ENCODE measurements at regions of chr5 and their contacts with region 1.

Region 1: DNA sequence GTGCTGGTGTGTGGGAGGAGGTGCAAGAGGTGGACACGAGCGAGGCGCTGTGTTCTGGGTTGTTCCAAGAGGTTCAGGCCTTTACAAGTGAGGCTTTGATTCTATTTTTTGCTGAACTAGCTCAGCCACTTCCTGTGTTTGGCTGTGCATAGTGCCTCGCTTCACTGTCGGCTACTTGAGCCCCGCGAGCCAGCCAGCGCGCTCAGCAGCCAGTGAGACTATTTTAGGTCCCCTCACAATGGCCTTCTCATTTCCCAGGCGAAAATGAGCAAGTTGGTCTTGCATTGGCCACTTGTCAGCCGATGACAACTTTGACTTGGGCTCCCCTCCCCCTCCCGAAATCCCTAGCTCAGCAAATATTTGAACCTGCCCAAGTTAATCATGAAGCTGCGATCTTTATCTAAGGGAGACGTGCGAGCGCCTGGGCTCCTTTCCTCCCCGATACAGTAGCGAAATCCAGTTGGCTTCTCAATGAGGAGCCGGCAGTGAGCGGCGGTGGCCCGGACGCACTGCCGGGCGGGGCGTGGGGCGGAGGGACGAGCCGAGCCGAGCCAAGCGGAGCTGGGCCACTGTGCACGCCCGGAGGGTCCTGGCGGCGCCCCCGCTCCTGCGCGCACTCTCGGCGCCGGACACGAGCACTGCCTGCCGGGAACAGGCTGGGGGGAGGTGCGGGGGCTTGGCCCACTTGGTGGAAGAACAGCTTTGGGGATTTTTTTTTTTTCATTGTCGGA is 72.6 kb downstream of the PIK3R1 start:
- DNase-seq: peak; percentile 81
- H3K4me3 ChIP-seq: peak overlapping the region; percentile 29 to 58 (median 50)
- H3K27ac ChIP-seq: peak overlapping the region; percentile 78 to 94 (median 84)
- H3K4me1 ChIP-seq: peaks cover 0 to 96% (median 92%) of the 10 kb centered on the region in 4 donors
- H3K27me3 ChIP-seq: no peaks in the 10 kb centered on the region
- CTCF ChIP-seq: no peak
- EP300 ChIP-seq: no peak
- POLR2A ChIP-seq: no peak

Region 2: GRCh38 chr5:67165526-67166459 is 1122.3 kb before region 1 on chr5:
- intact Hi-C with region 1: loop called (anchors 10 kb)
- DNase-seq: peak; percentile 92
- H3K4me3 ChIP-seq: peak overlapping the region in 3 of 4 donors; percentile 23 to 38 (median 32)
- H3K27ac ChIP-seq: peak overlapping the region; percentile 59 to 77 (median 76)
- H3K4me1 ChIP-seq: peaks cover 0 to 20% (median 19%) of the 10 kb centered on the region in 4 donors
- H3K27me3 ChIP-seq: no peaks in the 10 kb centered on the region
- CTCF ChIP-seq: peak; percentile 50 to 84 (median 78)
- EP300 ChIP-seq: no peak
- POLR2A ChIP-seq: no peak

Region 3: DNA sequence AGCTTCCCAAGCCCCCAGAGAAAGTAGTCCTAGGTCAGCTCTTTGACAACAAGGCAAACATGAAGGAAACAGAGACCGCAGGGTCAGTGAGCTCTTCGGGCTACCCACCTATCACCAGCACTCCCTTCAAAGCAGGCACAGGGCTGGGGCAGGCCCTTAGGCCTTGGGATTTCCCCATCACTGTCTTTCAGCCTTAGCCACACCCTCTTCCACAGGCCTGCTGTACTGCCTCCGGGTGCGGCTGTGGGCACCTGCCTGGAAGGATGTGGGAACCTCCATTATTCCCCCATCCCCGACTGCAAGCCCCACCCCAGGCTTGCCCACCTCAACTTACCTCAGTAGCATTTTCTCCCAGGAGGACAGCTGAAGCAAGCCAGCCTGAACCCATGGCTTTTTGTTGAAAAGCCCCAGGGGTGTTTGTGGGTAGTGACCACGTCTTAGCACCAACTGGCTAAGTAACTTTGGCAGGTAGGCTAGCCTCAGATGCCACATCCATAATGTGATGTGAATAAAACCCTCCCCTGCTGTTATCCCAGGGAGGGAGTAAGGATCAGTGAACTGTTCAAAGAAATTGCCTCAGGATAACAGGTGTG is 27.6 kb after region 1 on chr5:
- intact Hi-C with region 1: no loop called
- DNase-seq: no peak
- H3K4me3 ChIP-seq: no peak overlapping the region
- H3K27ac ChIP-seq: no peak overlapping the region
- H3K4me1 ChIP-seq: no peaks in the 10 kb centered on the region
- H3K27me3 ChIP-seq: no peaks in the 10 kb centered on the region
- CTCF ChIP-seq: no peak
- EP300 ChIP-seq: no peak
- POLR2A ChIP-seq: no peak

Region 4: DNA sequence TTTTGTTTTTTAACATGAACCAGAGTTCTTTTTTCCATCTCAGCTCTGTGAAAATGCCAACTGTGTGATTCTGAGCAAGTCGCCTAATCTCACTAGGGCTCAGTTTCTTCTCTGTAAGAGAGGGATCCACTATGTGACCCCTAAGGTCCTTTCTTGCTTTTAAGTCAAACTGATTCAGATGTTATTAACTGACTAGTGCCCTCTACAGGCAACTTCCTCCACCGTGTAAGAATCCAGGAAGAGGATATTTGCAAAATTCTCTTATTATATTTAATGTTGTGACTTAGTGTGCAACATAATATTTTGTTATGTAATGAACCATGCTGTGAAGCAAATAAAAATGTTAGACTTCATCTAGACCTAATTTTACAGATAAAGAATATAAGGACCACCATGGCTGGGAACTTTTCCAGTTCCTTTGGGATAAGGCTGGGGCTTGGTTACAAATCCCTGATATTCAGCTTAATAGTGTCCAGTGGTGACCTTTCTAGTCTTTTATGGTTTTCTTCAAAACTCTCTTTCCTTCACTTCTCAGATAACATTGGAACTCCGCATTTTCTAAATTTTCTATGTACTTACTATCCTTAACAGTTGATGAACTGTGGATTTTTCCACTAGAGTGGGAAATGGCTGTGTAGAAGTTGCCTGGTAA is 172.1 kb after region 1 on chr5:
- intact Hi-C with region 1: loop called (anchors 5 kb)
- DNase-seq: no peak
- H3K4me3 ChIP-seq: no peak overlapping the region
- H3K27ac ChIP-seq: no peak overlapping the region
- H3K4me1 ChIP-seq: peaks cover 0 to 18% (median 11%) of the 10 kb centered on the region in 4 donors
- H3K27me3 ChIP-seq: no peaks in the 10 kb centered on the region
- CTCF ChIP-seq: peak in 3 of 4 experiments; percentile 38 to 62 (median 45)
- EP300 ChIP-seq: no peak
- POLR2A ChIP-seq: no peak

Region 5: DNA sequence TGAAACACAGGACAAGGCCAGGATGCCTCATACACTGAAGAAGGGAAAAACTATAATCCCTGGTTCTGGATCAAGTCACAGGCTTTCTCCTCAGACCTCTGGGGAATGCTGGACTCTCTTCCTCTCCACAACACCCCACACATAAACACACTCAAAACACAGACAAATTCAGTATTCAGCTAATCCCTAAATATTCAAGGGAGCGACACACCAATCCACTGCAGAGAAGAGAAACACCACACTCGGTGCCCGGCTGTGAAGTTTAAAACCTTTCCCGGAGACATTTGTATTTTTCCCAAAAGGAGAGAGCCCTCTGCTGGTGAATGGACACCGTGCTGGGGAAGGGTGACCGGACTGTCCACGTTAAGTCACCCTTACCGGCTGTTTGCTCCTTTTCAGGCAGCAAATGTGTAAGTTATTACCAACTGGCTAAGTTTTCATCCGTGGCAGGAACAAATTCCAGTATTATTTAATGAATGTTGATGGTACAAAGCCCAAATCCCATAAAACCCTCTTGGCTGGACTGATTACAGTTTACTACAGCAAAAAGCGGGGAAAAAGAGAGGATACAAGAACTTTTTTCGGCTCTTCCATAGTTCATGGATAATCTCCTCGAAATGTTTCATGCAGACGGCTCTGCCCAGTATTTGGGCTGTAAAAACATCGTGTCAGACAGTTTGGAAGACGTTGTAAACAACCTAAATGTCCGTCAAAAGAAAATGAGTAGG is 674.8 kb after region 1 on chr5:
- intact Hi-C with region 1: loop called (anchors 2 kb)
- DNase-seq: peak; percentile 84
- H3K4me3 ChIP-seq: no peak overlapping the region
- H3K27ac ChIP-seq: peak overlapping the region in 3 of 4 donors; percentile 12 to 58 (median 49)
- H3K4me1 ChIP-seq: peaks cover 0 to 9% (median 8%) of the 10 kb centered on the region in 4 donors
- H3K27me3 ChIP-seq: no peaks in the 10 kb centered on the region
- CTCF ChIP-seq: peak; percentile 67 to 84 (median 75)
- EP300 ChIP-seq: no peak
- POLR2A ChIP-seq: no peak